Common myeloid progenitor, CD34-positive (primary cell): ENCODE measurements at regions of chr1 and their contacts with region 1.

Region 1: DNA sequence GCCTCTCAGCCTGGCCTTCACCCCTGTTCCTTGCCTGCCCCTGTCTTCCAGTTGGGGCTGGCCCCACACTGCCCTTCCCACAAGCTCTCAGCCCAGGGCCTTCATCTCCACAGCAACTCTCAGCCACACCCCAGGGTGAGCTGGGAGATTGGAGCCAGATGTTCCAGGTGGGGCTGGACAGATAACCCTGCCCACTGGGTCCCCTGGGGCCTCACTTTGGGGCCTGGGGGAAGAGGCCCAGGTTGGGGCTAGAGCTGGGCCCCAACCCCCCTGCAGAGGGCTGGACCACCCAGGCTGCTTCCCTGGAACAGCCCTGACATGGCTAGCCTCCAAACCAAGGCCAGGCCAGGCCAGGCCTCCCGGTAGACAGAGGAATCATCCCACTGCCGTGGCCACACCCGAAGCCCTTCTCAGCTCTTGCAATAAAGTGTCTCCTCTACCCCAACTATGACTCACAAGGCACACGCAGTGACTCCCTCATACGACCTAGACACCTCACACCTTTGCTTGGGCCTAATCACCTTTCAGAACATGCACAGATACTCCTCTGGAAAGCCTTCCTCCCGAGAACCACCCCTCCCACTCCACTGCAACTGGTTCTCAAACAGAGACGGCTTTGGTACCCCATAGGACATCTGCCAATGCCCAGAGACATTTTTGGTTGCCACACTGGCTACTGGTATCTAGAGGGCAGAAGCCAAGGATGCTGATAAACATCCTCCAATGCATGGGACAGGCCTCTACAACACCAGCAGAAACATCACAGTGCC is 22.2 kb downstream of the SLC2A1 start:
- DNase-seq: no peak
- H3K4me3 ChIP-seq: no peak overlapping the region
- H3K27ac ChIP-seq: peak overlapping the region in 1 of 2 experiments; percentile 50
- H3K4me1 ChIP-seq: peaks cover 16 to 86% (median 74%) of the 10 kb centered on the region in 4 experiments
- H3K27me3 ChIP-seq: no peaks in the 10 kb centered on the region

Region 2: DNA sequence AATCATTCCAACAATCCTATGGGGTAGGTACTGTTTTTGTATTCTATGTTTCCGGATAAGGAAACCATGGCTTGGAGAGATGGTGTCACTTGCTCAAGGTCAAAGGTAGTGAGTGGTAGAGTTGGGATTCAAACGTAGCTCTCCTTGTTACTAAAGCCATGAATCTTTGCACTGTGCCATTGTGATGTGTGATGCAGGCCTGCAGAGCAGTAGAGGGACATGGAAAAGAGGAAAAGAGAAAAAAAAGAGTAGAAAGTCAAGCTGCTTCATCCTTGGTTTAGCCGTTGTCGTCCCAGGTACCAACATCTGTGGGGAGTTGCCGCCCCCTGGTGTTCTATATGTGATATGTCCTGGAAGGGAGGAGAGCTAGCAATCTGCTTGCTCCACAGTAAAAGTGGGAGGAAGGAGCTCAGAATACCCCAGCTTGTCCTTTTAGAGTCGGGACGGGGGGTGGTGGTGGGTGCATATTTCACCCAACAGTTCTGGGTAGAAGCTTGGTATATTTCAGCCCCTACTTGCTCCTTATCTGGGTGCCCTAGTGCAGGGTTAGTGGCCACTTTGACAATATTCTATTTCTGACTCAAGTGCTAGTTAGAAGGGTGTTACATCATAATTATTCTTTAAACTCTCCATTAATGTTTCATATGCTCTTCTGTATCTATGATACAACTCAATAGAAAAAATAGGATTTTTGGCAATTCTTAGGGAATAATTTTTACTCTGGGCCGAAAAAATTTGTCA is 137.2 kb after region 1 on chr1:
- CTCF ChIA-PET with region 1: interaction called, 18 read pairs
- POLR2A ChIA-PET with region 1: no interaction called
- DNase-seq: peak; percentile 63 to 81 (median 74)
- H3K4me3 ChIP-seq: no peak overlapping the region
- H3K27ac ChIP-seq: no peak overlapping the region
- H3K4me1 ChIP-seq: peaks cover 0 to 6% (median 5%) of the 10 kb centered on the region in 4 experiments
- H3K27me3 ChIP-seq: no peaks in the 10 kb centered on the region

Region 3: DNA sequence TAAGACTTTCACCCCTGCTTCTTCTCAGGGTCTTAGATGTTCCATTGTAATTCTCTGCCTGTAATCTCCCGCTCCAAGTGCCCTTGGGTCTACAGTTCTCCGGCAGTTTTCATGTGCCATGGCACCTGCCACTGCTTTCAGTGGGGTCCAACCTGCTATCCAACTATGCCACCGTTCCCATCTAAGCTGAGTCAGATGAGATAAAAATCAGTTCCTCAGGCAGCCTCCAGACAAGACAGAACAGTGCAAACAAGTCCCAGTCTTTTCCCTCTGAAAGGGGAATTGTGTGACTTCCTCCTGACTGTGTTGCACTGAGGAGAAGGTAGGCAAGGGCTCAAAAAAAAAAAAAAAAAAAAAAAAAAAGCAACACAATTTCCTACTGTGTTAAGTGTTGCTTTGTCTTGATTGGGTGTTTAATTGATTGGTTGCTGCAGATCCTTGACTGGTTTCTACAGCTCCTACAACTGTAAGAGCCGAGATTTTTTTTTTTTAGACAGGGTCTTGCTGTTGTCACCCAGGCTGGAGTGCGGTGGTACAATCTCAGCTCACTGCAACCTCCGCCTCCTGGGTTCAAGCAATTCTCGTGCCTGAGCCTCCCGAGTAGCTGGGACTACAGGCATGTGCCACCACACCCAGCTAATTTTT is 184.9 kb after region 1 on chr1:
- CTCF ChIA-PET with region 1: no interaction called
- POLR2A ChIA-PET with region 1: no interaction called
- DNase-seq: no peak
- H3K4me3 ChIP-seq: no peak overlapping the region
- H3K27ac ChIP-seq: no peak overlapping the region
- H3K4me1 ChIP-seq: no peaks in the 10 kb centered on the region
- H3K27me3 ChIP-seq: peaks cover 0 to 4% (median 0%) of the 10 kb centered on the region in 5 experiments